ENCODE measurements at regions of chr4 and their contacts with region 1.

Region 1: DNA sequence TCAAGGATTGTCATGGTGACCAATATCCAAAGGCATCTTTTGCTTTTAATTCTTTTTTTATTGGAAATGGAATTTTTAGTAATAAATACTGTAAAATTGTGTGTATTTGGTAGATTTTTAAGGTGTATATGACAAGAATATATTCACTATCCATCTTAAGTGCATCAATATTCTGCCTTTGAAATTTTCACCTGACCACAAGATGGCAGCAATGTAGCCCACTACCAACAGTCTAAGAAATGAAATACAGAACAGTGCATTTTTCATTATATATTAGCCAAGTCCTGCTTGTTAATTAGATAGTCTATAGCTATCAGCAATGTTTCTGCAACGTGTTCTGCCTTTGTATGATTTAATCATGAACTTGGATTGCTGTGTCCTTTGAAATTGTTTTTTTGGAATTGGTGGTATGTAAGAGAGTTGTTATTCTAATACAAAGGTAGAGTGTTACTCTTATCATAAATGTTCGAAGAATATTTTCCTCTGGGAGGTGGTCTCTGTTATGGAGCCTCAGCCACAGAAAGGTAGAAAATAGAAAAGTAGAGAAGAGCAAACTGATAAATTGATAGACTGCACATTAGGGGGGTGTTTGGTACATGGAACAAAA is 38.2 kb downstream of the HPGDS start:
- DNase-seq: peak in 4 of 5 donors; percentile 5 to 22 (median 16)
- H3K4me3 ChIP-seq: no peak overlapping the region
- H3K4me3 Mint-ChIP-seq: no peak overlapping the region
- H3K27ac ChIP-seq: no peak overlapping the region
- H3K27ac Mint-ChIP-seq: no peak overlapping the region
- H3K4me1 ChIP-seq: no peaks in the 10 kb centered on the region
- H3K4me1 Mint-ChIP-seq: no peaks in the 10 kb centered on the region
- H3K27me3 ChIP-seq: no peaks in the 10 kb centered on the region
- H3K27me3 Mint-ChIP-seq: no peaks in the 10 kb centered on the region

Region 2: GRCh38 chr4:93897559-93897958 is 406.9 kb before region 1 on chr4:
- CTCF ChIA-PET with region 1: no interaction called
- POLR2A ChIA-PET with region 1: no interaction called
- intact Hi-C with region 1: no loop called
- DNase-seq: no peak
- H3K4me3 ChIP-seq: no peak overlapping the region
- H3K4me3 Mint-ChIP-seq: no peak overlapping the region
- H3K27ac ChIP-seq: no peak overlapping the region
- H3K27ac Mint-ChIP-seq: no peak overlapping the region
- H3K4me1 ChIP-seq: no peaks in the 10 kb centered on the region
- H3K4me1 Mint-ChIP-seq: no peaks in the 10 kb centered on the region
- H3K27me3 ChIP-seq: no peaks in the 10 kb centered on the region
- H3K27me3 Mint-ChIP-seq: no peaks in the 10 kb centered on the region

Region 3: GRCh38 chr4:94349193-94349592 is 44.7 kb after region 1 on chr4:
- CTCF ChIA-PET with region 1: no interaction called
- POLR2A ChIA-PET with region 1: no interaction called
- intact Hi-C with region 1: no loop called
- DNase-seq: no peak
- H3K4me3 ChIP-seq: no peak overlapping the region
- H3K4me3 Mint-ChIP-seq: no peak overlapping the region
- H3K27ac ChIP-seq: no peak overlapping the region
- H3K27ac Mint-ChIP-seq: no peak overlapping the region
- H3K4me1 ChIP-seq: no peaks in the 10 kb centered on the region
- H3K4me1 Mint-ChIP-seq: peaks cover 0 to 8% (median 3%) of the 10 kb centered on the region in 4 donors
- H3K27me3 ChIP-seq: no peaks in the 10 kb centered on the region
- H3K27me3 Mint-ChIP-seq: no peaks in the 10 kb centered on the region

Region 4: GRCh38 chr4:94390804-94391410 is 86.4 kb after region 1 on chr4:
- CTCF ChIA-PET with region 1: interaction called, 18 read pairs
- POLR2A ChIA-PET with region 1: no interaction called
- intact Hi-C with region 1: loop called (anchors 1 kb)
- DNase-seq: peak in 3 of 5 donors; percentile 16 to 21 (median 19)
- H3K4me3 ChIP-seq: no peak overlapping the region
- H3K4me3 Mint-ChIP-seq: no peak overlapping the region
- H3K27ac ChIP-seq: no peak overlapping the region
- H3K27ac Mint-ChIP-seq: no peak overlapping the region
- H3K4me1 ChIP-seq: no peaks in the 10 kb centered on the region
- H3K4me1 Mint-ChIP-seq: peaks cover 0 to 1% (median 0%) of the 10 kb centered on the region in 4 donors
- H3K27me3 ChIP-seq: no peaks in the 10 kb centered on the region
- H3K27me3 Mint-ChIP-seq: peaks cover 8 to 9% of the 10 kb centered on the region in 2 donors

Region 5: DNA sequence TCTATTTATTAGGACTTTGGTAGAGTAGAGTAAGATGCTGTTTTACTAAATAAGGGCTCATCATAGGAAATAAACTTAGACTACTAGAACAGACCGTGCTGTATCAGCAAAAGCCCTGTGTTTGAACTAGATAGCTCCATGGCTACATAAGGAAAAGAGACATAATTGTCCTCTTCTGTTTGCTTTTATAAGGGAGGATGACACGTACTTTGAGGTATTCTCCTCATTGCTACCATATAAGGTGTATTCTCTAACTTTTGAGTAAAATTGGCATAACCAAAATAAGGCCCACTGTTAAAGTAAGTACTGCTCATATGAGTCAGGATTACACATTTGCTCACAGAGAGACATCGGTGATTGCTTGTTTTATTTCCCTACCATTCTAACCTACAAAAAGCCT is 211.6 kb after region 1 on chr4:
- CTCF ChIA-PET with region 1: no interaction called
- POLR2A ChIA-PET with region 1: no interaction called
- intact Hi-C with region 1: no loop called
- DNase-seq: no peak
- H3K4me3 ChIP-seq: no peak overlapping the region
- H3K4me3 Mint-ChIP-seq: no peak overlapping the region
- H3K27ac ChIP-seq: no peak overlapping the region
- H3K27ac Mint-ChIP-seq: no peak overlapping the region
- H3K4me1 ChIP-seq: no peaks in the 10 kb centered on the region
- H3K4me1 Mint-ChIP-seq: peaks cover 12 to 20% (median 17%) of the 10 kb centered on the region in 4 donors
- H3K27me3 ChIP-seq: no peaks in the 10 kb centered on the region
- H3K27me3 Mint-ChIP-seq: no peaks in the 10 kb centered on the region

Region 6: GRCh38 chr4:94595879-94596483 is 291.5 kb after region 1 on chr4:
- CTCF ChIA-PET with region 1: interaction called, 3 read pairs
- POLR2A ChIA-PET with region 1: no interaction called
- intact Hi-C with region 1: loop called (anchors 1 kb)
- DNase-seq: peak in 4 of 5 donors; percentile 17 to 36 (median 30)
- H3K4me3 ChIP-seq: no peak overlapping the region
- H3K4me3 Mint-ChIP-seq: no peak overlapping the region
- H3K27ac ChIP-seq: no peak overlapping the region
- H3K27ac Mint-ChIP-seq: no peak overlapping the region
- H3K4me1 ChIP-seq: no peaks in the 10 kb centered on the region
- H3K4me1 Mint-ChIP-seq: no peaks in the 10 kb centered on the region
- H3K27me3 ChIP-seq: no peaks in the 10 kb centered on the region
- H3K27me3 Mint-ChIP-seq: no peaks in the 10 kb centered on the region